Common myeloid progenitor, CD34-positive (primary cell): ENCODE measurements at regions of chr6 and their contacts with region 1.

Region 1: DNA sequence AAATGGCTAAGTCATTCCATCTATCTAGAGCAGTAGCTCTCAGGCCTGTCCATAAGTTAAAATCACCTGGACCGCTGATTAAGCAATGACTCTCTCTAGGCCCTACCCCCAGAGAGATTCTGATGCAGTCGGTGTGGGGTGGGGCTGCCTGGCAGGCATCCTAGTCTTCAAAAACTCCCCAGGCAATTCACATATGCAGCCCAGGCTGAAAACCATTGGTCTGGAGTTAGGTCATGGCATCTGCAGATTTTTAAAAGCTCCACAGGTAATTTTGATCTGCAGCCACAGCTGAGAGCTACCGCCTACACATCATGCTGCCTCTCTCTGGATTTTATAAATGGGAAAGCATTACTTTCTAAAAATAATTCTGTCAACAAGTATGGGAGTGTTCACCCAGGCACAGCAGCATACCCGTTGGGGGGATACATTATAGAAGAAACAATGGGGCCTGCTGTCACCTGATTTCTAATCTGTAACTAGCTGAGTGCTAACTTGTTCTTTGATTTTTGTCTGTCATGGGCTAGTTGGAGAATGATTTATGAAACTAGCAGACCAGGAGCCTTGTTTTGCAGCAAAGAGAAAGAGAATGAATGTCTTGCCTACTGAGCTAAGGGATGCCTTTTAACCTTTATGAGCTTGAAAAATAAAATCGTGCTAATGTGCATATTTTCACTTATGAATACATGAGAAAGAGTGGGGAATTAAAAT is 44.1 kb upstream of the ATXN1 start:
- DNase-seq: no peak
- H3K4me3 ChIP-seq: no peak overlapping the region
- H3K27ac ChIP-seq: no peak overlapping the region
- H3K4me1 ChIP-seq: peaks cover 5 to 28% (median 21%) of the 10 kb centered on the region in 4 experiments
- H3K27me3 ChIP-seq: no peaks in the 10 kb centered on the region

Region 2: GRCh38 chr6:16819752-16820151 is 14.4 kb after region 1 on chr6:
- CTCF ChIA-PET with region 1: interaction called, 20 read pairs
- POLR2A ChIA-PET with region 1: no interaction called
- DNase-seq: peak in 1 of 3 donors; percentile 39
- H3K4me3 ChIP-seq: no peak overlapping the region
- H3K27ac ChIP-seq: no peak overlapping the region
- H3K4me1 ChIP-seq: peaks cover 0 to 8% (median 4%) of the 10 kb centered on the region in 4 experiments
- H3K27me3 ChIP-seq: no peaks in the 10 kb centered on the region